A549 (cell line): ENCODE measurements at regions of chr12 and their contacts with region 1.

Region 1: DNA sequence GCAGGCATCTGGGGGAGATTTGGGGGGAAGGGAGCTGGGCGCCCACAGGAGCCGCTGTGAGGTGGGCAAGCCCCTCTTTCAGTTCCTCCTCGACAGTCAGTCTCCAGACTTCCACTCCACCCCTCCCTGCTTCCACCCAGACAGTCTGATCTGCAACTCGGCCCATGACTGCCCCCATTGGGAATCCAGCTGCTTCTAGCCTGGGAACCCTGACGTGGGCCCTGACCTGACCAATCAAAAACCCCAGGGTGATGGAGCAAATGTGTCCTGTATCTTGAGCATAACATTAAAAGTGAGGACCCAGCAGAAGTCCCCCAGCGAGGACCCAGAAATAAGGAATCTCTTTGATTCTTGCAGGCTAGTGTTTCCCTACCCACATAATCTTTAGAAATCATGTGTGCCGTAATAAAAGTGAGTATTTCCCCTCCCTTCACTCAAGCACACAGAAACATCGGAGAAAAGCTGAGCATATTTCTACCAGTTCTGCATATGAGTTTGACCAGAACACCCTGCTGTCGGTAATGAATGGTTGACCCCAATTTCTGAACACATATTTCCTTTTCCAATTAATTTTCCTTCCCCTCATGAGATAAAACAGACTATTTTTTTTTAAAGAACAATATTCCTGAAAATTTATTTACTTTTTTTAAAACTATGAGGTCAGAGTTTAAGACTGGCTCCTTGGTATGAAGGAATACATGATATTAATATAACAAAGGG is 6.4 kb downstream of the SSH1 start:
- DNase-seq: peak; percentile 89 to 92
- ATAC-seq: peak; percentile 62 to 81
- H3K4me3 ChIP-seq: no peak overlapping the region; the same call in 2 of the 3 replicates
- H3K27ac ChIP-seq: peak overlapping the region; percentile 95
- H3K4me1 ChIP-seq: peaks cover 81% of the 10 kb centered on the region
- CTCF ChIP-seq: peak; percentile 34
- EP300 ChIP-seq: no peak
- POLR2A ChIP-seq: no peak
- RAD21 ChIP-seq: peak in 1 of 2 experiments; percentile 48; a peak in 3 of 5 replicates

Region 2: GRCh38 chr12:108838194-108839017 is 12.6 kb before region 1 on chr12:
- CTCF ChIA-PET with region 1: interaction called, 16 read pairs
- POLR2A ChIA-PET with region 1: interaction called, 19 read pairs
- DNase-seq: peak; percentile 96 to 99
- ATAC-seq: peak; percentile 93 to 96
- H3K4me3 ChIP-seq: no peak overlapping the region
- H3K27ac ChIP-seq: peak overlapping the region; percentile 92 to 94
- H3K4me1 ChIP-seq: peaks cover 67% of the 10 kb centered on the region
- CTCF ChIP-seq: no peak
- EP300 ChIP-seq: peak; percentile 49 to 87; a peak in 3 of 5 replicates
- POLR2A ChIP-seq: no peak
- RAD21 ChIP-seq: peak; percentile 22 to 32; a peak in 1 of 5 replicates

Region 3: DNA sequence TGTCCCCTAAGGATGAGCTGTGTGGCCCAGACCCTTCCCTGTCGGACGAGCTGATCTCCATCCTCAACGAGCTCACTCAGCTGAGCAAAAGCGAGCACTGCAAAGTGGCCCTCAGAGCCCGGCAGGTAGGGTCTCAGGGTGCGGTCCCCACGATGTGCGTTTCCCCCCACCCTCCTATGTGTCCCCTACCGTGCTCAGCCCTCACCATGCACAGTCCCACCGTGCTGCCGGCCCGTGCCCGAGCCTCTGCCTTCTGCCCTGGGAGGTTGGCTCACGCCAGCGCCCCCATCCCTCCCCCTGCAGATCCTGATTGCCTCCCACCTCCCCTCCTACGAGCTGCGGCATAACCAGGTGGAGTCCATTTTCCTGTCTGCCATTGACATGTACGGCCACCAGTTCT is 371.5 kb after region 1 on chr12:
- CTCF ChIA-PET with region 1: no interaction called
- POLR2A ChIA-PET with region 1: no interaction called
- DNase-seq: no peak
- ATAC-seq: no peak
- H3K4me3 ChIP-seq: no peak overlapping the region
- H3K27ac ChIP-seq: no peak overlapping the region
- H3K4me1 ChIP-seq: no peaks in the 10 kb centered on the region
- CTCF ChIP-seq: no peak
- EP300 ChIP-seq: no peak
- POLR2A ChIP-seq: no peak
- RAD21 ChIP-seq: no peak